ENCODE measurements at regions of chr9 and their contacts with region 1.

Region 1: GRCh38 chr9:93302551-93303257 is 118.8 kb downstream of the WNK2 start:
- DNase-seq: peak; percentile 30 to 79 (median 63)
- ATAC-seq: peak; percentile 92
- H3K4me3 ChIP-seq: no peak overlapping the region
- H3K4me3 Mint-ChIP-seq: no peak overlapping the region
- H3K27ac ChIP-seq: no peak overlapping the region
- H3K27ac Mint-ChIP-seq: no peak overlapping the region
- H3K4me1 ChIP-seq: no peaks in the 10 kb centered on the region
- H3K4me1 Mint-ChIP-seq: no peaks in the 10 kb centered on the region
- H3K27me3 ChIP-seq: no peaks in the 10 kb centered on the region
- H3K27me3 Mint-ChIP-seq: no peaks in the 10 kb centered on the region
- CTCF ChIP-seq: peak; percentile 49

Region 2: DNA sequence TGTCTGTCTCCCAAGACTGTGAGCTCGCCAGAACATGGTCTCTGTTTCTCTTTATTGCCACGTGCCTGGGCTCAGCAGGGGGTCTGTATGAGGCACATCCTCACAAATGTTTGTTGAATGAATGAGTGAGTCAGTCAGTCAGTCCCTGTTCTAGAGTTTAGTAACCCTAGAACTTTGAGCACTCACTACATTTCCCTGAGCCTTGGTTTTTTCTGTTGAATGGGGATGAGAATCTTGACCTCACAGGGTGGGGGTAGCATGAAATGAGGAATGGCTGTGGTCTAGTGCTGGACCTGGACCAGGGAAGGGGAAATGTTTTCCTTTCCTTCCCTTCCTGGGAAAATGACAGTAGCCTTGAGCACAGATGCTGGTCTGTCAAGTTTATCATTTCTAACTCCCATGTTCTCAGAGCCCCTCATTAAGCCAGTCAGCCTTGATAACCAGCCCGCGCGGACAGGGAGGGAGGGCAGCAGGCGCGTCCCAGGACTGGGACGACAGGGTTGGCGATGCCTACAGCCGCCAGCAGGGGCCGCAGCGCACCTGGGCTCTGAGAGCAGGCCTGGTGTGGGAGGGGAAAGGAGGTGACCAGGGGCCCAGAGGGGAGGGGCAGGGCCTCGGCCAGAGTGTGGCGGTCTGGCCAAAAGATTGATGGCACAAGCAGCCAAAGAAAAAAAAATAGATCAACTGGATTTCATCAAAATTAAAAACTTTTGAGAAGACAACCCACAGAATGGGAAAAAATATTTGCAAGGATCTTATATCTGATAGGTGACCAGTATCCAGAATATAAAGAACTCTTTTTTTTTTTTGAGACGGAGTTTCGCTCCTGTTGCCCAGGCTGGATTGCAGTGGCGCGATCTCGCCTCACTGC is 142.9 kb before region 1 on chr9:
- CTCF ChIA-PET with region 1: interaction called, 7 read pairs
- POLR2A ChIA-PET with region 1: no interaction called
- intact Hi-C with region 1: loop called (anchors 1 kb)
- DNase-seq: peak; percentile 43 to 81 (median 71)
- ATAC-seq: peak; percentile 91
- H3K4me3 ChIP-seq: no peak overlapping the region
- H3K4me3 Mint-ChIP-seq: no peak overlapping the region
- H3K27ac ChIP-seq: no peak overlapping the region
- H3K27ac Mint-ChIP-seq: no peak overlapping the region
- H3K4me1 ChIP-seq: peaks cover 6% of the 10 kb centered on the region
- H3K4me1 Mint-ChIP-seq: peaks cover 6% of the 10 kb centered on the region
- H3K27me3 ChIP-seq: peaks cover 0 to 5% of the 10 kb centered on the region in 2 experiments
- H3K27me3 Mint-ChIP-seq: no peaks in the 10 kb centered on the region
- CTCF ChIP-seq: peak; percentile 90

Measured in CD8-positive, alpha-beta T cell (primary cell).